ENCODE measurements at regions of chr20 and their contacts with region 1.

Region 1: DNA sequence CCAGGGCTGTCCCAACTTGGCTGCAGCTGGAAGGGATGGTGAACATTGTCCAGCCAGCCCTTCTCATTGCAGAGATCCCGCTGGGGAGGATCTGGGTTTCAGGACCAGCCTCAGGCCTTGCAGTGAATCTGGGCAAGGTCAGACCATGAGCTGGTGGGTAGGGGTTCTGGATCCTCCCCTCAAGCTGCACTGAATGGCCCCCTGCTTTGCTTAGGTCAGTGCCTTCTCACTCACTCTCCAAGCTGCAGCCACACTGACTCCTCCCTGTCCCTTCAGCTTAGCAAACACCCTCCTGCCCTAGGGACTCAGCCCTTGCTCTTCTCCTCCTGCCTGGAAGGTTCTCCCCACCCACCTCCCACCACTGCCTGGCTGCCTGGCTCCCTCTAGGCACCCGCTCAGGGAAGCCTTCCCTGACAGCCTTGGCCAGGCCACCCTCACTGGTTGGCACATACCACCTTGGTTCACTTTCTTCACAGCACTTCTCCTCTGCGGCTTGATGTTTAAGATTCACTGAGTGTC is 95.4 kb upstream of the KCNG1 start:
- DNase-seq: no peak
- ATAC-seq: no peak
- H3K4me3 ChIP-seq: no peak overlapping the region
- H3K27ac ChIP-seq: no peak overlapping the region
- H3K4me1 ChIP-seq: peaks cover 35% of the 10 kb centered on the region
- H3K27me3 ChIP-seq: no peaks in the 10 kb centered on the region
- CTCF ChIP-seq: no peak

Region 2: DNA sequence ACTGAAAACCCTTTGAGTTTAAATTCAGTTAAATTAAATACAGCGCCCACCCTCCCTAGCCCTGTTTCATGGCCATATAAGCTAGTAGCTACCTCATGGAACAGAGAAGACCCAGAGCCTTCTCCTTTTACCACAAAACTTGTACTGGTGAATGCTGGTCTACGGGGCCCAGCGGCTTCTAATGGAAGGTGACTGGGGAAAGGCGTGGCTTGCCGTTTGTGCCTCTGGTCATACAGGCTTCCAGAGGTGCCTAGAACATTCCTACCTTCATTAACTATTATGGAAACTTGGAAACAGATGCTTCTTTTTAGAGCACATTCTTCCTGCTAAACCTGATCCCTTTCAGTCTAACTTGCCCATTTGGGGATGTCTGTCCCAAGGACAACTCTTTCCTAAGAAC is 559.0 kb after region 1 on chr20:
- CTCF ChIA-PET with region 1: no interaction called
- POLR2A ChIA-PET with region 1: interaction called, 17 read pairs
- intact Hi-C with region 1: no loop called
- DNase-seq: no peak
- ATAC-seq: no peak
- H3K4me3 ChIP-seq: no peak overlapping the region
- H3K27ac ChIP-seq: no peak overlapping the region
- H3K4me1 ChIP-seq: no peaks in the 10 kb centered on the region
- H3K27me3 ChIP-seq: no peaks in the 10 kb centered on the region
- CTCF ChIP-seq: no peak

Measured in PC-3 (cell line).